ENCODE measurements at regions of chr15 and their contacts with region 1.

Region 1: DNA sequence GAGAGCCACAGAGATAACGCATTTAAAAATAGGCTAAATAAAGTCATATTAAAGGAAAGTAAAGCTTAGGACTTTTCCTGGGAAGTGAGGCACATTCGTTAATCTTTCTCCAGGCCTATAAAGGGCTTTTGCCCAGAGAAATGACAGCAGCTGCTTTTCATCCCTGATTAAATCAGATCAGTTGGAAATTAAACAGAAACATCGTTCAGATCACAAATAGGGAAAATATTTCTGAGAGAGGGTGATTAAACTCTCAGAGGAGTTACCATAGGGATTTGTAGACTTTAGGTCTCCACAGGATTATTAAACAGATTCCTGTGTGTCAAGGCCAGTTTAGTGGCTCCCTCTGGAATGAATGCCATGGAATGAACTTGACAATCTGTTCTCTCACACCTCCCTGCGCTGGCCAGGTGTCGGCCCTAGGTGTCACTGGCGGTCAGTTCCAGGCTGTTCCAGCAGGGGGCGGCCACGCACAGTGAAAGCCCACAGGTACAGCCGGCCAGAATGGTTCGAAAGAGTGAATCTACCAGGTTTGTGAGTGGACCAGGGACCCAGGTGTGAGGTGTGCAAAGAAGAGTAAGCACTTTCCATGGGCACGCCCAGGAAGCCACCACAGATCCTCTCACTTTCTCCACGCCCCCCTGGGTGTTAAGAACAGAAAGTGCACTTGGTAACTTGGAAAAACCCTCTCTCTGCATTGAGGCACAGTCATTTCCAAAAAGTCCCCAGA is 253.0 kb upstream of the RASGRP1 start:
- DNase-seq: peak; percentile 78
- CTCF ChIP-seq: peak; percentile 99

Region 2: DNA sequence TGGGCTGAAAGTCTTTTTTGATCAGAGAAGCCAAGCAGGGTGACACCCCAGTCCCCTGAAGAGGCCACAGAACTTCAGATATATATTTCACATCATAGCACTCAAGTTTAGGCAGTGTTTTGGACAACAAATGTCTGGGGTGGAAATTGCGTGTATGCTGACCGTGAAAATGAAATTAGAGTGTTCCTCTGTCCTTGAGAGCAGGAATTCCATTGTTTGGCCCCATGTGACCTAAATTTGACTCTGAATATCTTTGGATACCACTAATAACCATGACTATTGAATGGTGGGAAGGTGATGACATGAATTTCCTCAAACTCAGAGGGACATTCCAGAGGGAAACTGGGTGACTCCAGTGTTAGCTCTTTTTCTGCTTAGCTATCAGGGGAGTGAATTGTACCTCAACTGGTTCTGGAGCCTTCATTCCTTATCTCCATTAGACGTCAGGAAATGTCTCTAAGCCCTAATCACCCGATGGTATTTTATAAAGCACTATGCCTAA is 10.5 kb after region 1 on chr15:
- CTCF ChIA-PET with region 1: interaction called, 10 read pairs
- POLR2A ChIA-PET with region 1: no interaction called
- DNase-seq: no peak
- CTCF ChIP-seq: no peak

Measured in GM10248 (cell line).